Colonic mucosa (tissue), 4 donors: ENCODE measurements at regions of chr10 and their contacts with region 1.

Region 1: GRCh38 chr10:34637418-34637911 is 177.6 kb downstream of the PARD3 start:
- DNase-seq: peak; percentile 72
- H3K4me3 ChIP-seq: no peak overlapping the region
- H3K27ac ChIP-seq: no peak overlapping the region
- H3K4me1 ChIP-seq: no peaks in the 10 kb centered on the region
- H3K27me3 ChIP-seq: no peaks in the 10 kb centered on the region
- CTCF ChIP-seq: peak; percentile 96

Region 2: DNA sequence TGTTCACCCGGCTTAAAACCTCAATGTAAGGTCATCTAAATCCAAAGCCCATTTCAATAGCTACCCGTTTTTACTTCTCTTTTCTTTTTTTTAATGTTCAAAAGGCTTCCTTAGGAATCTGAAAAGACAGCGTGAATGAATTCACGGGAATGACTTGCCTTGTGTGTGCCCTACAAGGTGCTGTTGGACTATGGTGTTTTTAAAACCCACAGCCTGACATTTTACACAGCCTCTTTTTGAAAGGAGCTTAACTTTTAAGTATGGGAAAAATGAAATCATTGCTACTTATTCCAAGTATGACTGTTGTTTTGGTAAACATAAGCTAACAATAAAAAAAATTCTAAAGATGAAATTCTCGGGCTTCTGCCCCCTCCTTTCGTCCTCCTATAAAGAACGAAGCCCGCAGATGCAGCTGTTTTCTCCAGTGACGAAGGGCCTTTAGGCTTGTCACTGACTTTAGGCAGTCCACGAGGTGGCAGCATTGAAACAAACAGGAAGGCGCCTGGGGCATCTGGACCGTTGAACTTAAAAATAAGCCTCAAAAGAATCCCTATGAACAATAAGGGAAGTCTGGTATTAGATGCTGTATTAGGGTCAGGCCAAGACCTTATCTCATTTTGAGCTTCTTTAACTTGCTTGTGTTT is 1444.3 kb before region 1 on chr10:
- intact Hi-C with region 1: loop called (anchors 10 kb)
- DNase-seq: peak; percentile 86
- H3K4me3 ChIP-seq: no peak overlapping the region
- H3K27ac ChIP-seq: no peak overlapping the region
- H3K4me1 ChIP-seq: peaks cover 5% of the 10 kb centered on the region
- H3K27me3 ChIP-seq: no peaks in the 10 kb centered on the region
- CTCF ChIP-seq: peak; percentile 72

Region 3: DNA sequence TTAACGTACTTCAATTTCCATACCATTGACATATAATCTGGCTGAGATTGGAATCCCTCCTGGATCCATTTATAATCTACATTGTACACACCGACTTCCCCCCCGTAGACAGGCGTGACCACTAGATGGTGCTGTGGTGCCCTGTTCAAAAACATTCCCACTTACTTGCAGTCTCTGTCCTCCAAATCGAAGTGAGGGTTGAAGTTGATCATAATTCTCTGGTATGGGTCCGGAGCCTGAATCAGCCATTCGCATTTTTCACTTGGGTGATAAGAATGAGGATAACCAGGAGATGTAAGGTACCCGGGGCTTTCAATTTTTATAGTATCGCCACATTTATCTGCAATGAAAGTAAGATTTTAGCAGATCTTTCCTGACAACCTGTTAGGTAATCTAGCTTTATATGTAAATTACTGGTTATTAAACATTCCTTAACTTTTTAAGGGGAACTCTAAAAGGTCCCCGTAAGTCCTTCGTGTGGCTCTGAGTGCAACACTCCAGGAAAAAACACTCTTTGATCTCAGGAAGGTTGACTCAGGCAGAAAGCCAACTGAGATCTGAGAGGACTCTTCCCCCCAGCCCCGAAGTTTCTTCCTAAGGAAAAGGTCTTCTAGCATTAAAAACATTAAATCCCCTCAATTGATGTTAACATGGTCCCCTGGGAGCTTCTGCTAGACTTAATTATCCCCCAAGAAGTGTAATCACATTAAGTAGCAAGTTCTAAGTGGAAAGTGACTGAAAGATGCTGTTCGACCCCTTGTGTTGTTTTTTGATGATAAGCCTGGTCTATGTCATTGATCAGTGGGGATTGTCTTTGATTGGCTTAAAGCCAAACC is 1306.7 kb before region 1 on chr10:
- intact Hi-C with region 1: loop called (anchors 5 kb)
- DNase-seq: peak; percentile 90
- H3K4me3 ChIP-seq: no peak overlapping the region
- H3K27ac ChIP-seq: no peak overlapping the region
- H3K4me1 ChIP-seq: peaks cover 3% of the 10 kb centered on the region
- H3K27me3 ChIP-seq: no peaks in the 10 kb centered on the region
- CTCF ChIP-seq: peak; percentile 91

Region 4: GRCh38 chr10:34446049-34446448 is 191.4 kb before region 1 on chr10:
- intact Hi-C with region 1: no loop called
- DNase-seq: no peak
- H3K4me3 ChIP-seq: no peak overlapping the region
- H3K27ac ChIP-seq: no peak overlapping the region
- H3K4me1 ChIP-seq: no peaks in the 10 kb centered on the region
- H3K27me3 ChIP-seq: no peaks in the 10 kb centered on the region
- CTCF ChIP-seq: no peak

Region 5: GRCh38 chr10:34528320-34528719 is 109.1 kb before region 1 on chr10:
- intact Hi-C with region 1: loop called (anchors 5 kb)
- DNase-seq: no peak
- H3K4me3 ChIP-seq: no peak overlapping the region
- H3K27ac ChIP-seq: no peak overlapping the region
- H3K4me1 ChIP-seq: no peaks in the 10 kb centered on the region
- H3K27me3 ChIP-seq: no peaks in the 10 kb centered on the region
- CTCF ChIP-seq: no peak